ENCODE measurements at regions of chr11 and their contacts with region 1.

Region 1: DNA sequence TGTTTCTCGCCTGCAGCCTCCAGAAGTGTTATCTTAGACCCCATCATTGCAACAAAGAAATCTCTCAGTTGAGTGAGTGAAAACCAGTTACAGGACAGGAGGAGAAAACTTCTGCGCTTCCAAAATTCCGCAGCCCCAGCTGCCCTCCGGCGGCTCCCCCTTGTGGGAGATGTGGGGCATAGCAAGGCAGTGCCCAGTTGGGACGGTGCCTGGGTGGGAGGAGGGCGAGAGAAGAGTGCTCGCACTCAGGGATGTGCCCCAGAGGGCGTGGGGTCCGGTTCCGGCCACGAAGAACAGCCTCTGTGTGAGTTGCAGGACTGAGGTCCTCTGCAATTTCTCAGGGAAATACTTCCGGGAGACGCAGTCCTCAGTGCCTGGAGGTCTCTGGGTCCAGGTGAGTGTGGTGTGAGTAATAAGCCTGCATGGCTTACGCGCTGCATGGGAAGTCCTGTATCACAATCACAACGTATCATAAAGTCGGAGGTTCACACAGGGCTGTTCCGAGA is 87.0 kb upstream of the BLID start:
- DNase-seq: peak; percentile 90

Region 2: GRCh38 chr11:121655537-121656327 is 547.3 kb before region 1 on chr11:
- intact Hi-C with region 1: loop called (anchors 5 kb)
- DNase-seq: peak; percentile 97

Region 3: GRCh38 chr11:122020902-122021301 is 182.1 kb before region 1 on chr11:
- intact Hi-C with region 1: loop called in 1 of 2 experiments (anchors 5 kb)
- DNase-seq: no peak

Region 4: DNA sequence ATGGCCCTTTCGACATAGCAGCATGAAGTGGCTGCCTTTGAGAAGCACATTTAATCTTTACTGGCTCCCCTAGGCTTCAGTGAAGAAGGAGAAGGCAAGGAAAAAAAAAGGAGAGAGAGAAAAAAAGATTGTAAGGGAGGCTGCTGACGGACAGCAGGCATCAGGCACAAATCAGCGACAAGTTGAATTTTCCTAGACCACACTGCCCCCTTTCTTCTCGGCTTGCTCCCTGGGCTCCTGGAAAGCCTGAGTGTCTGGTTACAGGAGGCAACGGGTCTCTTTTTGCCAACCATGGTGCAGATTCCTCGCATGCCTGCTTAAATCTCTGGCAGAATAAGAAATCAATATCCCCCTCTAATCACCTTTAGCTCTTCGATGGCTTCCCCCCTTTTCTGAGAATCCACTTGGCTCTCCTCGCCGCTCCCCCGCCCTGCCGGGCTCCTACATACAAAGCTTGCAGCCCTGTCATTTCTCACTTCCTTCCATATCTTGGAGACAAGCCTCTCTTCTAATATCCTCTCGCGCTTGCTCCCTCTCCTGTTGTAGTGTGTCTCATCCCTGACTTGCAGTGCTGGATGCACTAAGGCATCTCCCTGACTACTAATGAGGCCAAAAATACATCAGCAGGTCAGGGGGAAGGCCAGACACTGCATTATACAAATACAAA is 101.2 kb before region 1 on chr11:
- intact Hi-C with region 1: loop called in 1 of 2 experiments (anchors 5 kb)
- DNase-seq: peak; percentile 85

Region 5: GRCh38 chr11:122108192-122108799 is 94.7 kb before region 1 on chr11:
- intact Hi-C with region 1: loop called (anchors 2 to 5 kb)
- DNase-seq: no peak

Region 6: DNA sequence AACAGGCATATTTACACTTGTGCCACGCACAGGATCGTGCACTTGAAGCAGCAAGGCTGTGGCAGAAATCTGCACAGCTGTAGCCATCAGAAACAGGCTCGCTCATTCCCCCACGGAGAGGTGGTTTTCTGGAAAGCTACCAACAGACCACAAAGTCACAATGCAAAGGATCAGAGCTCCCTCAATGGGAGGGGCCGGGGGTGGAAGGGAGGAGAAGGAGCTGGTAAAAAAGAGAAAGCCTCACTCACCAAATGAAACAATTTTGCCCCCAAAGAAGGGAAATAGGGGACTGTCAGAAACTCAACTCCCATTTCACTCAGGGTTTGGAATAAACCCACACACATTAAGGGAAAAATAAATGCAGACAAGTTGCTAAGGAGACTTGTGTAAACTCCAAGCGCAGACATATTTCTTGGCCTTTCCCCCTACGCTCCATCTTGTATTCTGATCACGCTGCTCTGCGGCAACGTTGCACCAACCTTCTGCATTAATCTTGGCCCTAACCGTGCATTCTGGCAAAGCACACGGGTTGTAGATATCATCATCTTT is 43.8 kb before region 1 on chr11:
- intact Hi-C with region 1: loop called in 1 of 2 experiments (anchors 5 kb)
- DNase-seq: no peak